Psoas muscle (tissue), 8 donors: ENCODE measurements at regions of chr16 and their contacts with region 1.

Region 1: DNA sequence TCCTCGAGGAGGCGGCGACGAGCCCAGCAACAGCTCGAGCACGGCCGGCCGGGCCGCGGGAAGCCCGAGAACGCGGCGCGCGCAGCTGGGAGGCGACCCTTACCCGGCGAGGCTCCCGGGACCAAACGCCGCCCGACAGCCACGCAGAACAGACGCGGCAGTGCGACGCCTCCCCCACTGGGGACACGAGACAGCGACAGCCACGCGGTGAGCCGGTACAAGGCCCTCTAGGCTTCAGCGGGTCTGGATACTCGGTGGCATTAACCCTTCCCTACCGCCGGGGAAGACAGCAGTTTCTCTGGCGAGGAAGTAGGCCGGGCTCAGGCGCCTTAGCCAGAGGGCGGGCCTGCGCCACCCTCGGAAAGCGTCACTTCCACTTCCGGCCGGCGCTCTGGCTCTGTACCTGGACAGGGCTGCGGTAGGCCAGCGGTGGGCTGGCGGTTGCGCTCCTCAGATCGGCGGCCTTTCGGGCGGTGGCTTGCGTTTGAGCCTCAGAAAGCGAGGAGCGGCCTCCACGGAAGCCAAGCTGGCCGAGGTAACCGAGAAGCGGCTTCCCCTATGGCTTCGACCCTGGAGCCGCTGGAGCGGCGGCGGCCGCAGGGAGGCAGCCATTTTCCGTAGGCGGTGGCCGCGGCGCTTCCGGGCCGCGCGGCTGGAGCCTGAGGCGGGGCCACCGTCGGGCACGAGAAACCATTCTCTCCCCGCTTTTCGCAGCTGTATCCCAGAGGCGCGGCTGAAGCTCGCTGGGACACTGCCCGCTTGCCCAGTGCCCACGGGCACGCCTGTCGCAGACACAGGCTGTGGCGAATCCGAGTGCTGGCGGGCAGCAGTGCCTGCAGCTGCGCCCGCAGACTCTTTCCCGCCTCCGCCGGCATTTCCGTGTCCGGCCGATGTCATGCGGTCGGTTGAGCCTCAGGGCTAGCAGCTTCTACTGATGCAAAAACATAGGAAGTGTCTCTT is at the starts of genes TIGD7 and ZNF75A:
- DNase-seq: peak; percentile 88 to 93
- ATAC-seq: peak; percentile 99 to 100 (median 99)
- H3K4me3 ChIP-seq: peak within 1 kb of the TSS; percentile 97
- H3K27ac ChIP-seq: peak within 1 kb of the TSS; percentile 97
- H3K4me1 ChIP-seq: peaks cover 10% of the 10 kb centered on the region
- H3K27me3 ChIP-seq: no peaks in the 10 kb centered on the region
- CTCF ChIP-seq: peak; percentile 13
- total RNA-seq, gene TIGD7: 5.8 to 7.6 (median 6.5) TPM
- total RNA-seq, gene ZNF75A: 11.4 to 20.5 (median 15.4) TPM

Region 2: GRCh38 chr16:3234543-3235541 is 70.5 kb before region 1 on chr16 and contains the start of gene ZNF200:
- intact Hi-C with region 1: loop called in 1 of 2 experiments (anchors 2 kb)
- DNase-seq: peak; percentile 97 to 98
- ATAC-seq: peak; percentile 99 to 100 (median 100)
- H3K4me3 ChIP-seq: peak within 1 kb of the TSS; percentile 97
- H3K27ac ChIP-seq: peak within 1 kb of the TSS; percentile 93
- H3K4me1 ChIP-seq: peaks cover 7% of the 10 kb centered on the region
- H3K27me3 ChIP-seq: no peaks in the 10 kb centered on the region
- CTCF ChIP-seq: no peak
- total RNA-seq, gene ZNF200: 2.8 to 4.0 (median 3.4) TPM

Region 3: GRCh38 chr16:3282730-3283524 is 22.5 kb before region 1 on chr16 and contains the start of gene ZNF263:
- intact Hi-C with region 1: loop called (anchors 1 to 2 kb)
- DNase-seq: peak; percentile 96 to 97
- ATAC-seq: peak; percentile 96 to 98 (median 97)
- H3K4me3 ChIP-seq: peak within 1 kb of the TSS; percentile 76
- H3K27ac ChIP-seq: peak within 1 kb of the TSS; percentile 100
- H3K4me1 ChIP-seq: peaks cover 15% of the 10 kb centered on the region
- H3K27me3 ChIP-seq: no peaks in the 10 kb centered on the region
- CTCF ChIP-seq: no peak
- total RNA-seq, gene ZNF263: 11.0 to 17.8 (median 11.7) TPM

Region 4: GRCh38 chr16:3400779-3401688 is 95.6 kb after region 1 on chr16 and contains the starts of genes ZNF174 and ZSCAN32:
- intact Hi-C with region 1: loop called in 1 of 2 experiments (anchors 1 kb)
- DNase-seq: peak; percentile 99
- ATAC-seq: peak; percentile 99 to 100 (median 100)
- H3K4me3 ChIP-seq: peak within 1 kb of the TSS; percentile 98
- H3K27ac ChIP-seq: peak within 1 kb of the TSS; percentile 90
- H3K4me1 ChIP-seq: peaks cover 12% of the 10 kb centered on the region
- H3K27me3 ChIP-seq: no peaks in the 10 kb centered on the region
- CTCF ChIP-seq: no peak
- total RNA-seq, gene ZNF174: 6.2 to 8.4 (median 7.6) TPM
- total RNA-seq, gene ZSCAN32: 4.7 to 9.5 (median 6.2) TPM

Region 5: GRCh38 chr16:3457434-3458252 is 152.3 kb after region 1 on chr16:
- intact Hi-C with region 1: loop called in 1 of 2 experiments (anchors 1 kb)
- DNase-seq: peak; percentile 93 to 97
- ATAC-seq: peak; percentile 93 to 97 (median 95)
- H3K4me3 ChIP-seq: peak overlapping the region; percentile 87
- H3K27ac ChIP-seq: peak overlapping the region; percentile 98
- H3K4me1 ChIP-seq: peaks cover 54% of the 10 kb centered on the region
- H3K27me3 ChIP-seq: no peaks in the 10 kb centered on the region
- CTCF ChIP-seq: peak; percentile 57

Region 6: GRCh38 chr16:3503523-3503922 is 198.1 kb after region 1 on chr16:
- intact Hi-C with region 1: loop called in 1 of 2 experiments (anchors 2 kb)
- DNase-seq: no peak
- ATAC-seq: no peak
- H3K4me3 ChIP-seq: no peak overlapping the region
- H3K27ac ChIP-seq: no peak overlapping the region
- H3K4me1 ChIP-seq: peaks cover 7% of the 10 kb centered on the region
- H3K27me3 ChIP-seq: no peaks in the 10 kb centered on the region
- CTCF ChIP-seq: no peak